Naive thymus-derived CD8-positive, alpha-beta T cell (primary cell): ENCODE measurements at regions of chr22 and their contacts with region 1.

Region 1: GRCh38 chr22:37267135-37267587 is 15.1 kb upstream of the CYTH4 start:
- DNase-seq: peak; percentile 54 to 79 (median 73)
- ATAC-seq: peak; percentile 82 to 90
- H3K4me3 Mint-ChIP-seq: peak overlapping the region; percentile 82 to 93 (median 86)
- H3K27ac Mint-ChIP-seq: peak overlapping the region; percentile 85 to 98 (median 95)
- H3K4me1 Mint-ChIP-seq: peaks cover 27 to 35% (median 31%) of the 10 kb centered on the region in 4 donors
- H3K27me3 Mint-ChIP-seq: no peaks in the 10 kb centered on the region

Region 2: DNA sequence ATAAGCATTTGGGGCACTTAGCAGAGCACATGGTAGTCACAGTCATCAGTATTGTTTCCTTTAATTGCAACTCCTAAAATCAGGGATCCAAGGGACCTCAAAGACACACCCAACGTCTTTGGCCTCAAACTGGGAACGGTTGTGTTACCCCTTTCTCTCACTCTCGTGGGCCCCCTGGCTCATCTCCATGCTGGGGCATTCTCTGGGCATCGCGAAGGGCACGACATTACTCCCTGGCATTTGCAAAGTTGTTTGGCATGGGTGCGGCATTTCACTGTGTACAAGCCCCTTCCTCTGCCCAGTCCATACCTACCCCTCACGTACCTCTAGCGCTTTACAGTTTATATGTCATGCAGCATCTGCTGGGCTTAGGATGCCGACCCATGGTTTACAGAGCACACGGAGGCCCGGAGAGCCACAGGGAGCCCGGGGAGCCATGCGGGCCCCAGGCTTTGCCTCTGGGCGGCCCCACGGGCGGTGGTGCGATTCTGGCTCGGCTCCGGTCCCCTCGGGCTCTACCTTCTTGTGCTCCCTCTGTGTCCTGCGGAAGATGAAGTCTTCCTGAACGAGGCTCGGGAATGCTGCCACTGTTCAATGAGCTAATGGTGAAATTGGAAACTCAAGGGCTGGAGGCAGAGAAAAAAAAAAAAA is 541.7 kb before region 1 on chr22:
- POLR2A ChIA-PET with region 1: no interaction called
- DNase-seq: no peak
- ATAC-seq: no peak
- H3K4me3 Mint-ChIP-seq: no peak overlapping the region
- H3K27ac Mint-ChIP-seq: no peak overlapping the region
- H3K4me1 Mint-ChIP-seq: no peaks in the 10 kb centered on the region
- H3K27me3 Mint-ChIP-seq: peaks cover 18 to 68% (median 37%) of the 10 kb centered on the region in 5 donors

Region 3: DNA sequence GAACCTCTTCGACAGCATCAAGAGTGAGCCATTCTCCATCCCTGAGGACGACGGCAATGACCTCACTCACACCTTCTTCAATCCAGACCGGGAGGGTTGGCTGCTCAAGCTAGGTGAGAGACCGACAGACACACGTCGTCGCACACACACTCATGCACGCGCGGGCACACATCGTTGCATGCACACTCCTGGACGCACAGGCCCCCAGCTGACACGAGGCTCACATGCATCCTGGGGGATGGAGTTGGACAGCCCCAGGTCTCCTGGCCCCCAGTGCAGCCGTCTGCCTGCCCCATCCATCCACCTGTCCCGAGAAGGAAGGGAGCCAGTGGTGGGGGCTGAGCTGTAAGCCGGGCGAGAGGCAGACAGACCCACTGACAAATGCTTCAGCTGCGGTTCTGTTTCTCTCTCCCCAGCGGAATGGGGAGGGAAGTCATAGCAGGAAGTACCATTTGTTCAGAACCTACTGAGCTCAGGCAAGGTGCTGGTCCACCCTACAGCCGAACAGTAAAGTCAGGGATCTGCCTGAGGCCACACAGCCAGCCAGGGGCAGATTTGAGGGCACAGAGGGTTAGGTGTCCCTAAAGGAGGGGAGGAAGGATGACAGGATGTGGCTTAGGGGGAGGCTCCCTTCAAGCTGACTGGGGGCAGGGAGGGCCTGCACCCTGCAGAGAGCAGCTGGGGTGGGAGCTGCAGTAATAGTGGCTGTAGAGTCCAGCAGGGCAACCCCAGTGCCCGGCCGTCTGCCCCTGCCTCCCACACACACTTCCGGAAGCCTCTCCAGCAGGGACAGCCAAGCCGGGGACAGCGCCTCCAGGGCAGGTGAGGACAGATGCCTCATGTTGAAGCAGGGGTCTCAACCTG is 42.3 kb after region 1 on chr22:
- POLR2A ChIA-PET with region 1: interaction called, 13 read pairs
- DNase-seq: peak in 8 of 10 donors; percentile 39 to 77 (median 62)
- ATAC-seq: peak; percentile 31 to 51
- H3K4me3 Mint-ChIP-seq: peak overlapping the region; percentile 63 to 91 (median 84)
- H3K27ac Mint-ChIP-seq: peak overlapping the region; percentile 71 to 100 (median 96)
- H3K4me1 Mint-ChIP-seq: peaks cover 43 to 97% (median 89%) of the 10 kb centered on the region in 4 donors
- H3K27me3 Mint-ChIP-seq: no peaks in the 10 kb centered on the region

Region 4: GRCh38 chr22:37316875-37317371 is 49.8 kb after region 1 on chr22:
- POLR2A ChIA-PET with region 1: interaction called, 11 read pairs
- DNase-seq: peak; percentile 52 to 83 (median 66)
- ATAC-seq: peak; percentile 66 to 74
- H3K4me3 Mint-ChIP-seq: peak overlapping the region in 1 of 10 donors; percentile 34
- H3K27ac Mint-ChIP-seq: peak overlapping the region in 4 of 10 donors; percentile 34 to 73 (median 52)
- H3K4me1 Mint-ChIP-seq: peaks cover 20 to 60% (median 51%) of the 10 kb centered on the region in 4 donors
- H3K27me3 Mint-ChIP-seq: peaks cover 0 to 2% (median 0%) of the 10 kb centered on the region in 5 donors